Tibial artery (tissue), 4 donors: ENCODE measurements at regions of chr15 and their contacts with region 1.

Region 1: GRCh38 chr15:55649054-55649423 is 60.9 kb upstream of the PYGO1 start:
- DNase-seq: no peak
- H3K4me3 ChIP-seq: no peak overlapping the region
- H3K27ac ChIP-seq: no peak overlapping the region
- H3K4me1 ChIP-seq: no peaks in the 10 kb centered on the region
- H3K27me3 ChIP-seq: no peaks in the 10 kb centered on the region
- CTCF ChIP-seq: no peak

Region 2: GRCh38 chr15:55526559-55527036 is 122.4 kb before region 1 on chr15:
- intact Hi-C with region 1: loop called (anchors 10 kb)
- DNase-seq: no peak
- H3K4me3 ChIP-seq: no peak overlapping the region
- H3K27ac ChIP-seq: no peak overlapping the region
- H3K4me1 ChIP-seq: no peaks in the 10 kb centered on the region
- H3K27me3 ChIP-seq: no peaks in the 10 kb centered on the region
- CTCF ChIP-seq: peak in 1 of 2 experiments; percentile 28

Region 3: GRCh38 chr15:55552926-55553325 is 96.1 kb before region 1 on chr15:
- intact Hi-C with region 1: no loop called
- DNase-seq: no peak
- H3K4me3 ChIP-seq: no peak overlapping the region
- H3K27ac ChIP-seq: peak overlapping the region in 1 of 2 donors; percentile 25
- H3K4me1 ChIP-seq: peaks cover 0 to 11% (median 0%) of the 10 kb centered on the region in 4 donors
- H3K27me3 ChIP-seq: no peaks in the 10 kb centered on the region
- CTCF ChIP-seq: no peak

Region 4: GRCh38 chr15:55846116-55846707 is 197.2 kb after region 1 on chr15:
- intact Hi-C with region 1: loop called (anchors 10 kb)
- DNase-seq: no peak
- H3K4me3 ChIP-seq: no peak overlapping the region
- H3K27ac ChIP-seq: no peak overlapping the region
- H3K4me1 ChIP-seq: no peaks in the 10 kb centered on the region
- H3K27me3 ChIP-seq: no peaks in the 10 kb centered on the region
- CTCF ChIP-seq: peak; percentile 84 to 92